H1 (cell line): ENCODE measurements at regions of chr3 and their contacts with region 1.

Region 1: GRCh38 chr3:38131621-38132369 is 5.1 kb downstream of the ACAA1 start:
- DNase-seq: peak in 1 of 2 experiments; percentile 88
- H3K4me3 ChIP-seq: no peak overlapping the region
- H3K27ac ChIP-seq: no peak overlapping the region
- H3K4me1 ChIP-seq: peaks cover 0 to 3% (median under 1%) of the 10 kb centered on the region in 4 experiments; a peak in 1 of 7 replicates
- H3K27me3 ChIP-seq: no peaks in the 10 kb centered on the region
- CTCF ChIP-seq: peak in 2 of 3 experiments; percentile 80 to 82; a peak in 3 of 4 replicates
- EP300 ChIP-seq: no peak
- POLR2A ChIP-seq: no peak
- RAD21 ChIP-seq: peak; percentile 77 to 85

Region 2: DNA sequence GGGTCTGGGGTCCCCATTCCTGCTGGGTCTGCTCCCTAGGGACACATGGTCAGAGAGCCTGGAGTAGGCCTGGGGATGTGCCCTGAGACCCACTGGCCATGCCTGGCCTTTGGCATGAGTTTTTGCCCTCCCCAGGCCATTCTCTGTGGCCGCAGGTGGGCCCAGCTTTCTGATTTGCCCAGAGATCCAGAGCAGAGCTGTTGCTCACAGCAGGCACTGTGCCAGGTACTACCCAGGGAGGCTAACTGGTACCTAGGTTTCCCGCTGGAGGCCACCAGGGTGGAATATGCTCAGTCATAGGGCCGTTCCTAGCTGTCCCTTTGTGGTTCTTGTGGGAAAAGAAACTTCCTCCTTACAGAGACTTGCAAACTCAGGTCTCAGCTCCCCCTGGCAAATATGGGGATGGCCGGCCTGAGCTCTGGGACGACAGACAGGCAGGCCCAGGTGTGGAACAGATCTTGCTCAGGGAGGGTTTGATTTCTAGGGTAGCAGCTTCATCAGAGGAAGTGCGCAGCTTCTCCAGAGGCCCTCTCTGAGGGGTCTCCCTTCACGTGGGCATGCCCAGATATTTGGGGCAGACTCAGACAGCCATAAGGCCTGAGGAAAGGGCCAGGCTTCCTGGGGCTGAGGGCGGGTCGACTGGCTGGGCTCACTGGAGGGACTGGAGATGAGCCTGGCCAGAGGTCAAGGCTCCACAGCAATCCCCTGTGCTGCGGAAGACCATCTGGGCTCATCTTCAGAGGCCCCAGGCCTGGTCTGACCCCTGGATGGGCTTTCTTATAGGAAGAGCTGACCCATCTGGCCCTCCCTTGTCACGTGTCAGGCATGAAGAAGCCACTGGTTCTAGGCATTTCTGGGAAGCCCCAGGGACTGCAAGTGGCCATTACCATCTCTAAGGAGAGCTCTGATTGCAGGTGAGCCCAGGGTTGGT is 22.9 kb before region 1 on chr3:
- CTCF ChIA-PET with region 1: interaction called, 10 read pairs
- POLR2A ChIA-PET with region 1: no interaction called
- DNase-seq: no peak
- H3K4me3 ChIP-seq: no peak overlapping the region
- H3K27ac ChIP-seq: no peak overlapping the region
- H3K4me1 ChIP-seq: no peaks in the 10 kb centered on the region
- H3K27me3 ChIP-seq: no peaks in the 10 kb centered on the region
- CTCF ChIP-seq: no peak
- EP300 ChIP-seq: no peak
- POLR2A ChIP-seq: no peak
- RAD21 ChIP-seq: no peak

Region 3: DNA sequence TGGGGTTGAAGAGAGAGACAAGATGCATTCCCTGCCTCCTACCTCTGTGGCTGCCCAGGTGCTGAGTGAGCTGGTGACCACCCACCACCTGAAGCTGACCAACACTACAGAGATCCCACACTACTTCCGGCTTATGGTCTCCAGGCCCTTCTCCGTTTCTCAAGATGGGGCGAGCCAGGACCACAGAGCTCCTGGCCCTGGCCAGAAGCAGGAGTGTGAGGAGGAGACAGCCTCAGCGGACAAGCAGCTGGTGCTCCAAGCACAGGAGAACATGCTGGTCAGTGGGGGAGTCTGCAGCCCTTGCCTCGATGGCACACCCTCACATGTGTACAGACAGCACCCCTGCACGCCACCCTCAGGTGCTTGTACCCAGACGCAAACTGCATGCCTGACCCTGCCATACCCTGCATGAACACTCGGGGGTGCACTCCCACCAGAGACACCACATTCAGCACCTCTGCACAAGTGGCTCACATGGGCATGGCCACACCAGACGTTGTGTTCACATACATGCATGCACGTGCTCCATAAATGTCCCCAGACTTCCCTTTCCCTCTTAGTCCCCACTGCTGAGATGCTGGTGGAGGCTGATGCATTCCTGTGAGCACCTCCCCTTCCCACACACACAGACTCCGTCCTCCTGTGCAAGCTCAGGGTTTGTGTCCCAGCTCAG is 13.9 kb before region 1 on chr3:
- CTCF ChIA-PET with region 1: interaction called, 105 read pairs
- POLR2A ChIA-PET with region 1: interaction called, 14 read pairs
- DNase-seq: peak in 1 of 2 experiments; percentile 87
- H3K4me3 ChIP-seq: no peak overlapping the region
- H3K27ac ChIP-seq: no peak overlapping the region
- H3K4me1 ChIP-seq: no peaks in the 10 kb centered on the region
- H3K27me3 ChIP-seq: no peaks in the 10 kb centered on the region
- CTCF ChIP-seq: peak in 2 of 3 experiments; percentile 83 to 96; a peak in 3 of 4 replicates
- EP300 ChIP-seq: no peak
- POLR2A ChIP-seq: no peak; a peak in 1 of 3 replicates
- RAD21 ChIP-seq: peak; percentile 86 to 87

Region 4: DNA sequence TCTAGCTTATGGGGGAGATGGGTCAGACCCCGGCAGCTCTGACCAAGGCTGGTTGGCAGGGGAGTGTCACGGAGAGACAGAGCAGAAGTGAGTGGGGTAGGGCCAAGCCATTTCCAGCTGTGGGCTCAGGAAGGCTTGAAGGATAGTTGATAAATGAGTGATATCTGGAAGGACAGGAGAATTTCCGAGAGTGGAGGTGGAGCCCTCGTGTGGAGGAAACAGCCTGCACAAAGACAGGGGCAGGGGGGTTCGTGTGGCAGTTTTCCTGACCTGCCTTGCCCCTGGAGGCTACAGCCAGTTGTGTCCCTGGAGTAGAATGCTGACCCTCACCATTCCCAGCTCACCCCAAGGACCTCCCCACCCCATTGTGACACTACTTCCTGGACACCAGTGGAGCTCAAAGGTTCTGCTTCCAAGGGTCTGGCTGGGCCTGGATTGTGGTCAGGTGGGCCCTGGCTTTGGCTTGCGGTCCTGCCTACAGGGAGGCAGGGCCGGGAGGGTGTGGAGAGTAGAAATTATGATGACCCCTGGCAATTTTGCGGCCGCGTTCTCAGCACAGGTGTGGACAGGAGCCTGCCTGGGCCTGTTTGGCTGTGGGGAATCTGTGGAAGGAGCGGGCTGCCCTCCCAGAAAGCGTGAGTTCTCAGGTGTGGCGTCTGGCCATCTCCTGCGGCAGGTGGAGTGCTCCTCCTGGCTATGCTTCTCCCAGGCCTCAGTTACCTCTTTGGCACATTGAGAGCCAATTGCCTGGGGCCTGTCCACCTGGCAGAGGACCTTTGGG is 150.3 kb after region 1 on chr3 and contains the start of gene SLC22A14:
- CTCF ChIA-PET with region 1: interaction called, 14 read pairs
- POLR2A ChIA-PET with region 1: interaction called, 3 read pairs
- DNase-seq: peak; percentile 15 to 64
- H3K4me3 ChIP-seq: no peak within 1 kb of the TSS
- H3K27ac ChIP-seq: no peak within 1 kb of the TSS
- H3K4me1 ChIP-seq: no peaks in the 10 kb centered on the region
- H3K27me3 ChIP-seq: no peaks in the 10 kb centered on the region
- CTCF ChIP-seq: peak; percentile 65 to 67 (median 67)
- EP300 ChIP-seq: no peak
- POLR2A ChIP-seq: no peak
- RAD21 ChIP-seq: peak; percentile 58 to 70
- total RNA-seq, gene SLC22A14: not detected in 2 replicates

Region 5: GRCh38 chr3:38332201-38332600 is 200.4 kb after region 1 on chr3:
- CTCF ChIA-PET with region 1: no interaction called
- POLR2A ChIA-PET with region 1: no interaction called
- DNase-seq: no peak
- H3K4me3 ChIP-seq: no peak overlapping the region
- H3K27ac ChIP-seq: no peak overlapping the region
- H3K4me1 ChIP-seq: no peaks in the 10 kb centered on the region
- H3K27me3 ChIP-seq: no peaks in the 10 kb centered on the region; a peak in 2 of 7 replicates
- CTCF ChIP-seq: no peak
- EP300 ChIP-seq: no peak
- POLR2A ChIP-seq: no peak
- RAD21 ChIP-seq: no peak